Vagina (tissue), 2 donors: ENCODE measurements at regions of chr6 and their contacts with region 1.

Region 1: GRCh38 chr6:53171605-53172446 is 23.2 kb upstream of the GCM1 start:
- DNase-seq: no peak
- H3K4me3 ChIP-seq: no peak overlapping the region
- H3K27ac ChIP-seq: no peak overlapping the region
- H3K4me1 ChIP-seq: no peaks in the 10 kb centered on the region
- H3K27me3 ChIP-seq: no peaks in the 10 kb centered on the region
- CTCF ChIP-seq: peak; percentile 100
- POLR2A ChIP-seq: no peak

Region 2: DNA sequence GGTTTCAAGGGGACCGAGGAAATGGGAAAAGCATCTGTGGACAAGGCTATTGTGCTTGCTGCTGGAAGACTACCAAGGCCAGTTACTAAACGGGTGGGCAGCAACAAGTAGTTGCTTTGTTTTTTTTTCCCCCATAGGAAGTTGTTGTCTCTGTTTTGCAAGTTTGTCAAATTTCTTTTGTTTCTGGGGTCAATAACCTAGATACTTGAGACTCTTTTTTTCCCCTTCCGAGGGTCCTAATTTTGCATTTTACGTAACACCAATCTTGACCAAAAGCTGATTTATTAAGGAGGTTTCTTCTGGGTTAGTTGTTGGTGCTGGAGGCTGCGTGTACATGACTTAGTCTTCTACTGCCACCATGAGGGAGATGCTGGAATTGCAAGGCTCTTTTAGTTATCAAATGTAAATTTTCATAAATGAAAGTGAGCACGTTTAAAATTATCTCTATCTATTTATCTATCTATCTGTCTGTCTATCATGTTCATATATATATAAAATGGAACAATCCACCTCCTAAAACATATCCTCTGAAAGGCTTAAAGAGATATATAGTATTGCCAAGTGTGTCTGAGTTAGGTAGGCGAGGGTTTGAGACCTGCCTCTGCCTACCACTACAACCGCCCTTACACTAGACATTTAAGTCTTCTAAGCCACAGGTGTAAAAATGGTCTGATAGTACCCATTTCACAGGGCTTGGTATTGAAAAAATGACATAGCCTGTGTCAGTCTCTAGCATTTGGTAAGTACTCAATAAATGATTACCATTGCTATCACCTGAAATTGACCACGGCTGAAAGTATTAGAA is 312.9 kb after region 1 on chr6:
- intact Hi-C with region 1: loop called (anchors 5 kb)
- DNase-seq: no peak
- H3K4me3 ChIP-seq: no peak overlapping the region
- H3K27ac ChIP-seq: no peak overlapping the region
- H3K4me1 ChIP-seq: no peaks in the 10 kb centered on the region
- H3K27me3 ChIP-seq: no peaks in the 10 kb centered on the region
- CTCF ChIP-seq: peak; percentile 84 to 96 (median 93)
- POLR2A ChIP-seq: no peak

Region 3: DNA sequence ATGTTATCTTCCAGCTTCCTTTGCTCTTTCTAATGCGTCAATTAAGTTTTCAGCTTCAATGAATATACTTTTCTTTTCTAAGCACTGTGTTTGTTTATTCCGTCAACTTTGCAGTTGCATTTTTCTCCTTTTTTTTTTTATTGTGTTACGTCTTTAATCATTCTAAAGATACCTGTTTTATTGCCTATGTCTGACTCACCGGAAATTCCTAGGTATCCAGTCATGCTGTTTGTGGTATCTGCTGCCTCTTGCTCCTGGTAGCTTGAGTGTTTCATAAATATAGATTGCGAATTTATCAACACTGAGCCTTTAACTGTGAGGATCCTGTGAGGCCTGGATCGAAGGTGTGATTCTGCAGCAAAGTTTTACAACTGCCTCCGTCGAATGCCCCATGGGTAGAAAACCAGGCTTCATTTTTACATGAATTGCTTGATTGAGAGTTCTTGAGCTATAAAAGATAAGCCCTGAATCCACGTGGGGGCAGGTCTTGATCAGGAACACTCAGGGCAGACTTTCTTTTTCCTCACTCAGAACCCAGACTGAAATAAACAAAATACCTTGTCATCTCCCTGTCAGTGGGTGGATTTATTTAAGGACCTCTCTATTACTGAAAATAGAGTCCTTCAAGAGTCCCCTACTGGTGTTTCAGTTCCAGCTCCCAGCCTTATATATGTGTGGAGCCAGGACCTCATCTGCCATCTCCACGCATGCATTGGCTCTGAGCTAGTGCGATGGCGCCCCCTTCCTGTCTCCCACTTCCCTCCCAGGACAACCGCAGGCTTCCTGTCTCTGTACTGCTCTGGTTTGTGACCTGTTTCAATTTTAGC is 562.9 kb after region 1 on chr6:
- intact Hi-C with region 1: loop called (anchors 10 kb)
- DNase-seq: no peak
- H3K4me3 ChIP-seq: no peak overlapping the region
- H3K27ac ChIP-seq: no peak overlapping the region
- H3K4me1 ChIP-seq: no peaks in the 10 kb centered on the region
- H3K27me3 ChIP-seq: no peaks in the 10 kb centered on the region
- CTCF ChIP-seq: peak in 1 of 3 experiments; percentile 14
- POLR2A ChIP-seq: no peak